B cell (primary cell): ENCODE measurements at regions of chr12 and their contacts with region 1.

Region 1: DNA sequence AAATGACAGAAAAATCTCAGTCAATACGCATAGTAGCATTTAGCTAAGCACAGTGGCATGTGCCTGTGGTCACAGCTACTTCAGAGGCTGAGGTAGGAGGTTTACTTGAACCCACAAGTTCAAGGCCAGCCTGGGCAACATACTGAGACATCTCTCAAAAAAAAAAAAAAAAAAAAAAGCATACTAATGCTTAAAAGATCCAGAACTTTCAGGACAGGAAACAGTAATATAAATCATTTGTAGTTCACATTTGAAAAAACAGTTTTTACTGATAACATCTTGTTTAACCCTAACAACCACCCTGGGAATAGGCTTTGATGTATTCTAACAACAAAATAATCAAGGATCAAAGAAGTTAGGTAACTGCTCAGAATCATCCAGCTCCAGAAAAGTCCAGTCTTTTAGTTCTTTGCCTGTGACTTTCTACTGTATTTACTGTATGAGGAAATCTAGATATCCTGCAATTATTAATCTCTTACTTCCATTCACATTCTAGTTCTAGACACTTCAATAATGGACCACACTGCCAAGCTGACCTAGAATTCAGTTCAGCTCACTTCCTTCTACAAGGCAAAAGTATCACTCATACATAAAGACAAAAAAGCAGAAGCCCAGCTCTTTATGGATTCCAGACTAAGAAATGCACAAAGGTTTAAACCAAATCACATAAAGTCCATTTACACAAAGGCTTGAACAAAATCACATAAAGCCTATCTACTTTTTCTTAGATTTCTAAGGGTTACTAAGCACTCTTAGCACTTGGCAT is 28.5 kb downstream of the PAWR start:
- DNase-seq: no peak
- ATAC-seq: no peak
- H3K4me3 ChIP-seq: no peak overlapping the region
- H3K4me3 Mint-ChIP-seq: no peak overlapping the region
- H3K27ac ChIP-seq: no peak overlapping the region
- H3K27ac Mint-ChIP-seq: no peak overlapping the region
- H3K4me1 ChIP-seq: peaks cover 0 to 9% of the 10 kb centered on the region in 2 donors
- H3K4me1 Mint-ChIP-seq: peaks cover 27% of the 10 kb centered on the region
- H3K27me3 ChIP-seq: no peaks in the 10 kb centered on the region
- H3K27me3 Mint-ChIP-seq: no peaks in the 10 kb centered on the region
- CTCF ChIP-seq: no peak

Region 2: DNA sequence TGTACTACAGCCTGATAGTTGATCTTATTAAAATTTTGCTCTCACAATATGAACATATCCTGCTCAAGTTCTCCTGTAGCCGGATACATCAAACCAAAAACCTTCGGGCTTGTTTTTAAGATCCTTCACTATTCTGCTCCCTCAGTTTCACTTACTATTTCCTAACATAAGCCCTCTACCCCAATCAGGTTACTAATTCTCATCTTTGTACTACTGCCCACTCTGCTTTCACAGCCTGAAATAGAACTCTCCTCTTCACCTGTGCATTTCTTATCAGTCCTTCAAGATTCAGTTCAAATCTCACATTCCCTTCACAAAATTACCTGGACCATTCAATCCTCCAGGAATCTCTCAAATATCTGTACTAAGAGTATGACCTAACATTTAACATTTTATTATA is 14.3 kb after region 1 on chr12:
- CTCF ChIA-PET with region 1: no interaction called
- POLR2A ChIA-PET with region 1: no interaction called
- intact Hi-C with region 1: loop called (anchors 2 kb)
- DNase-seq: no peak
- ATAC-seq: no peak
- H3K4me3 ChIP-seq: no peak overlapping the region
- H3K4me3 Mint-ChIP-seq: no peak overlapping the region
- H3K27ac ChIP-seq: no peak overlapping the region
- H3K27ac Mint-ChIP-seq: no peak overlapping the region
- H3K4me1 ChIP-seq: peaks cover 8 to 20% of the 10 kb centered on the region in 2 donors
- H3K4me1 Mint-ChIP-seq: peaks cover 70% of the 10 kb centered on the region
- H3K27me3 ChIP-seq: no peaks in the 10 kb centered on the region
- H3K27me3 Mint-ChIP-seq: no peaks in the 10 kb centered on the region
- CTCF ChIP-seq: no peak